Gastrocnemius medialis (tissue), 4 donors: ENCODE measurements at regions of chr9 and their contacts with region 1.

Region 1: GRCh38 chr9:24479361-24480059 is 66.2 kb downstream of the IZUMO3 start:
- DNase-seq: no peak
- ATAC-seq: no peak
- H3K4me3 ChIP-seq: no peak overlapping the region
- H3K27ac ChIP-seq: no peak overlapping the region
- H3K4me1 ChIP-seq: no peaks in the 10 kb centered on the region
- H3K27me3 ChIP-seq: no peaks in the 10 kb centered on the region
- CTCF ChIP-seq: no peak
- POLR2A ChIP-seq: no peak

Region 2: GRCh38 chr9:24144796-24145195 is 334.7 kb before region 1 on chr9:
- in situ Hi-C with region 1: no loop called
- intact Hi-C with region 1: no loop called
- DNase-seq: no peak
- ATAC-seq: no peak
- H3K4me3 ChIP-seq: no peak overlapping the region
- H3K27ac ChIP-seq: no peak overlapping the region
- H3K4me1 ChIP-seq: no peaks in the 10 kb centered on the region
- H3K27me3 ChIP-seq: no peaks in the 10 kb centered on the region
- CTCF ChIP-seq: no peak
- POLR2A ChIP-seq: no peak

Region 3: GRCh38 chr9:24552526-24553182 is 73.1 kb after region 1 on chr9:
- in situ Hi-C with region 1: no loop called
- intact Hi-C with region 1: no loop called
- DNase-seq: no peak
- ATAC-seq: no peak
- H3K4me3 ChIP-seq: no peak overlapping the region
- H3K27ac ChIP-seq: no peak overlapping the region
- H3K4me1 ChIP-seq: no peaks in the 10 kb centered on the region
- H3K27me3 ChIP-seq: no peaks in the 10 kb centered on the region
- CTCF ChIP-seq: no peak
- POLR2A ChIP-seq: no peak

Region 4: DNA sequence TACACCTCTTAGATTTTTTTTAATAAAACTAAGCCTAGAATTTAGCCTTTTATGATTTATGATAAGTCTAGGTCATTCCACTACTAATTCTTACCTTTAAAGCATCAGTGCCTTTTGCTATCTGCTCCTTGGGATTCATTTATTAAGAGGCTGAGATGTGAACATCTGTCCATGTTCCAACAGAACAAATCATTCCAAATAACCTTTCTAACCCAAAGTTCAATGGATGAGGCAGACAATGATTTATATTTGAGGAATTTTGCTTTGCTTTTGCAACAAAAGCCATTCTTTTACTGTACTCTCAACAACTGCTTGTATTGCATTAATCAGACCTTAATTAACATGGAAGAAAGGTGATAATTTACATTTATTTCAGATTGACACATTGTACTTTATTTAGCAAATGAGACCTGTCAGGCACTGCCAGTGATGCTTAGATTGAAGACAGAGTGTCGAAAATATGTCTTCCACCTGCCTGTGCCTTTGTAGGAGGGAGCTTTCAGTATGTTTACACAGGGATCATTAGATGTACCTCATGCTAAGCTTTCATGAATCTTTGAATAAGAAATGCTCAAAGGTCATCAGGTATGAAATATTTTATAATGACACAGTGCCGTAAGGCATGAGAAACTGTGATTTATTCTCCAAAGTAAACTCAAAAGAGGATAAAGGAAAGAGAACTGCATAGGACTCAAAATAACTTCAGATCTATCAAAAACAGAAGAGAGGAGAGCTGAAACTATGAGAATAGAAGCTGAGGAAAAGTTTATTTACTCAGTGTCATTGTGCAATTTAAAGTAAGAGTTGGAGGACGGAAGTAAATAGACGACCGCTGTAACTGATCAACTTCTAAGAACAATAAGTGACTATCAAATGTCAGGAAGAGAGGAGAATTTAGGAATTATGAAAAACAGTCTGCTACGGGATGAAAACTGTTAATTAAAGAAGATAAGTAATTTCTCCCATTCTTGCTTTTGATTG is 102.9 kb after region 1 on chr9:
- in situ Hi-C with region 1: loop called in 1 of 4 experiments (anchors 25 kb)
- intact Hi-C with region 1: no loop called
- DNase-seq: no peak
- ATAC-seq: no peak
- H3K4me3 ChIP-seq: no peak overlapping the region
- H3K27ac ChIP-seq: no peak overlapping the region
- H3K4me1 ChIP-seq: no peaks in the 10 kb centered on the region
- H3K27me3 ChIP-seq: no peaks in the 10 kb centered on the region
- CTCF ChIP-seq: no peak
- POLR2A ChIP-seq: no peak